Body of pancreas (tissue), 4 donors: ENCODE measurements at regions of chr1 and their contacts with region 1.

Region 1: GRCh38 chr1:119008483-119009311 is 20.6 kb upstream of the TBX15 start:
- DNase-seq: peak; percentile 43 to 56 (median 49)
- ATAC-seq: peak; percentile 70
- H3K4me3 ChIP-seq: no peak overlapping the region
- H3K27ac ChIP-seq: no peak overlapping the region
- H3K4me1 ChIP-seq: peaks cover 28% of the 10 kb centered on the region
- H3K27me3 ChIP-seq: peaks cover 0 to 24% of the 10 kb centered on the region in 2 donors
- CTCF ChIP-seq: peak; percentile 6 to 78 (median 69)
- POLR2A ChIP-seq: no peak

Region 2: DNA sequence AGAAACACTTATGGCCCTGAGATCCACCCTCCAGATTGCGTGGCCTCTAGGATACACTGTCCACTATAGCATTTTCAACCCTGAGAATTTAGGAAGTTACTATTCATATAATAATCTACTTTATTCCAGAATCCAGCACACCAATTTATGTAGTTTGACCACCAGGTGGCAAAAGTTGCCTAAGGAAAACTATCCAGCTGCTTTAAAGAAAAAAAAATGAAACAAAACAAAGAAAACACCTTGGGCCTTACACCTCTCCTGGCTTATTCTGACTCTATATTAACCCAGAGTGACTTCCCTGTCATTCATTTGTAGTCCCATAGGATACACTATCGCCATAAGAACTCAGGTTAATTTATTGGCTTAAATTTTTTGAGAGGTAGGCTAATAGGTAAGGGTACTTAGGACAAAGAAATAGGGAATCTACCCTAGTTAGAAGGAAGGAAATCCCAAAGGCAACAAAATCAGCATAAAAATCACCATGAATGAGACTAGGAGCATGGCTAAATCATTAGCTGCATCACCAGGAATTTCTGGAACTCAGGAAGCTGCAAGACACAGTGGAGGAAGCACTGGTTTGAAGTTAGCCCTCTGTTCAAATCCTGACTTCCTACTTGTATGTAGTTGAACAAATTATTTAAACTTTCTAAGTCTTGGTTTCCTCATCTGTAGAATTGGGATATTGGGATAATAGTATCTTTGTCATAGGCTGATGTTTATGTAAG is 931.2 kb before region 1 on chr1:
- intact Hi-C with region 1: loop called (anchors 10 kb)
- DNase-seq: peak; percentile 26 to 55 (median 37)
- ATAC-seq: peak; percentile 68
- H3K4me3 ChIP-seq: no peak overlapping the region
- H3K27ac ChIP-seq: no peak overlapping the region
- H3K4me1 ChIP-seq: no peaks in the 10 kb centered on the region
- H3K27me3 ChIP-seq: no peaks in the 10 kb centered on the region
- CTCF ChIP-seq: peak; percentile 52 to 73 (median 66)
- POLR2A ChIP-seq: no peak

Region 3: DNA sequence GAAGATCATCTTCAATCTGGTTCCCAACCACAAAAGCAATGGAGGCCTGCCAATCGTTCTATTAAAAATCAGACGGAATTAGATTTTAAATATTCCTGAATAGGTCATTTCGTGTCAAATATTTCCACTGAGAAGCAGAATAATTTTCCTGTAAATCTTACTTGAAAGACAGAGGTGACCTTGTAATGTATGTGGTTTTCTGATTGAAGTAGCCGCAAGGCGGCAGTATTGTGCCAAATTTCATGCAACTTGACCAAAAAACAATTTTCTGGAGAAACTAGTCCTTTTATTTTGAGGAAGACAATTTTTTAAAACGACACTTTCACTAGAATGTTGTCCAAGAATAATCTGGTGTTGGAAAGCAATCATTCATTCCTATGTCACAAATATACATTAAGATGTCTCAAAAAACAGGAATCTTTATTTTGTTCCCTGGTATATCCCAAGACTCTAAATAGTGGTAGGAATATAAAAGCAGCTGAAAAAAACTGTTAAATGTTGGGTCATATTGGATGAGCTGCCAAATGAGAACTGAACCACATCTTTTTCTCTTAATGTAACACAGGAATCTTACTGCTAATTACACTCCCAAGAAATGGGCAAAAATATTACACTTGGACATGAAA is 857.3 kb before region 1 on chr1:
- intact Hi-C with region 1: loop called (anchors 5 kb)
- DNase-seq: peak; percentile 70 to 78 (median 74)
- ATAC-seq: no peak
- H3K4me3 ChIP-seq: no peak overlapping the region
- H3K27ac ChIP-seq: no peak overlapping the region
- H3K4me1 ChIP-seq: peaks cover 5% of the 10 kb centered on the region
- H3K27me3 ChIP-seq: no peaks in the 10 kb centered on the region
- CTCF ChIP-seq: peak; percentile 49 to 77 (median 68)
- POLR2A ChIP-seq: no peak

Region 4: DNA sequence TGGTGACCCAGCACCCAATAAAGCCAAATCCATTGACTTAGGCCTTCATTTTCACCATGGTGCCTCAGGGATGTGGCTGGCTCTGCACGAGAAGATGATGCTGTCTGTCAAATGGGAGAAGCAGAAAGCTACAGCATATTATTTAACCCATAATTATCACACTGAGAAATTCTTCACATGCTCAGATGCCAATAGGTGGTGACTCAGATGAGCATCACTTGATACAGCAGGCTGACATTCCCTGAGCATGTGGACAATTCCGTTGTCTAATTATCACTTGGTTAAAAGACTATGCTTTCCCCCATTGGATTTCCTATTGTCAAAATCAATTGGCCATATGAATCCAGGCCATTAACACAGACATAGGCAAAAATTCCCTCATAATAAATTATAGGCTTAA is 454.3 kb after region 1 on chr1:
- intact Hi-C with region 1: no loop called
- DNase-seq: no peak
- ATAC-seq: no peak
- H3K4me3 ChIP-seq: no peak overlapping the region
- H3K27ac ChIP-seq: no peak overlapping the region
- H3K4me1 ChIP-seq: no peaks in the 10 kb centered on the region
- H3K27me3 ChIP-seq: no peaks in the 10 kb centered on the region
- CTCF ChIP-seq: no peak
- POLR2A ChIP-seq: no peak